Activated naive CD4-positive, alpha-beta T cell treated with anti-CD3 and anti-CD28 coated beads, Interleukin-2, amount 10 ng/mL, durations not matched to agents 7 days and 5 days (primary cell): ENCODE measurements at regions of chr3 and their contacts with region 1.

Region 1: GRCh38 chr3:197224034-197224444 is 74.4 kb downstream of the DLG1 start:
- DNase-seq: no peak
- H3K4me3 Mint-ChIP-seq: no peak overlapping the region
- H3K27ac Mint-ChIP-seq: no peak overlapping the region
- H3K4me1 Mint-ChIP-seq: peaks cover 8% of the 10 kb centered on the region
- H3K27me3 Mint-ChIP-seq: no peaks in the 10 kb centered on the region

Region 2: GRCh38 chr3:197501879-197502620 is 278.0 kb after region 1 on chr3:
- CTCF ChIA-PET with region 1: interaction called, 41 read pairs
- DNase-seq: peak; percentile 55
- H3K4me3 Mint-ChIP-seq: no peak overlapping the region
- H3K27ac Mint-ChIP-seq: no peak overlapping the region
- H3K4me1 Mint-ChIP-seq: peaks cover 2% of the 10 kb centered on the region
- H3K27me3 Mint-ChIP-seq: no peaks in the 10 kb centered on the region

Region 3: DNA sequence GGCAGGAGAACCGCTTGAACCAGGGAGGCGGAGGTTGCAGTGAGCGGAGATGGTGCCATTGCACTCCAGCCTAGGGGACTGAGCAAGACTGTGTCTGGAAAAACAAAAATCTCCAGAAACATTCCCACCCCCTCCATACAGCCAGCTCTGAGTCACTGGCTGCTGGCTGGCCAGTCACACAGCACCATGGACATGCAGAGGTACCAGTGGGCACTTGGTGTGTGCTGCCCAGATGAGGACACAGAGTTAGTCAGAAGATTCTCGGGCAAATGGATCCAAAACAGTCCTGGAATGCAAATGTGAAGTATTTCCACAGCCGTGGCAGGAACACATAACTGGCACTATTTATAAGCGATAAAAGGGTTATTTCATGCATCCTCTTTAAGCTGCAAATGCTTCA is 287.1 kb after region 1 on chr3:
- CTCF ChIA-PET with region 1: interaction called, 29 read pairs
- DNase-seq: no peak
- H3K4me3 Mint-ChIP-seq: no peak overlapping the region
- H3K27ac Mint-ChIP-seq: no peak overlapping the region
- H3K4me1 Mint-ChIP-seq: peaks cover 10% of the 10 kb centered on the region
- H3K27me3 Mint-ChIP-seq: no peaks in the 10 kb centered on the region